Activated CD4-positive, alpha-beta T cell treated with anti-CD3 and anti-CD28 coated beads for 36 hours (primary cell): ENCODE measurements at regions of chr16 and their contacts with region 1.

Region 1: DNA sequence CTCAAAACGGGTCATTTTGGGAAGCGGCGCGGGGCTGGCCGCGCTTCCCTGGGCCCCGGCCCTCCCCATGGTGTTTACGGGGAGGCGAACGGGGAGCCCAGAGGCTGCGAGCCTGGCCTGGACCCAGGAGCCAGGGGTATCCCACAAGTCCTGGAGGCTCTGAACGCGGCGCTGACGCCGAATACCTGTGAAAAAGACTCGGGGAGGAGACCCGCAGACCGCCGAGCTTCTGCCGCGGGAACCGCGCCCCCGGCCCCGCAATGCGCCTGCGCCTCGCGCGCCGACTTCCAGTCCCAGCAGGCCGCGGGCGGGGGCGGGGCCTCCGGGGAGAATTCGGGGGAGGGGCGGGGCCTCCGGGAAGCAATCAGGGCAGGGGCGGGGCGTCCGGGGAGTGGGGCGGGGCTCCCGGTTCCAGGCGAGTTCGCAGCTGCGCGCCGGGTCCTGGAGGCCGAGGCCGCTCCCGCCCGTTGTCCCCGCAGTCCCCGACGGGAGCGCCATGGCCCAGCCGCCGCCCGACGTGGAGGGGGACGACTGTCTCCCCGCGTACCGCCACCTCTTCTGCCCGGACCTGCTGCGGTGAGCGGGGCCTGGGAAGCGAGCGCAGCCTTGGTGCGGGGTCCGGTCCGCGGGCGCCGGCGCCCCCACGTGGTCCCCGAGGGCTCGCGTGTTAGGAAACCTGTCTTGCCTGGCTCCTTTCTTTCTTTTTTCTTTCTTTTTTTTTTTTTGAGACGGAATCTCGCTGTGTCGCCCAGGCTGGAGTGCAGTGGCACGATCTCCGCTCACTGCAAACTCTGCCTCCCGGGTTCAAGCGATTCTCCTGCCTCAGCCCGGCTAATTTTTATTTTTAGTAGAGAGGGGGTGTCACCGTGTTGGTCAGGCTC is at the start of gene DECR2:
- DNase-seq: peak; percentile 100
- ATAC-seq: peak; percentile 87
- H3K4me3 Mint-ChIP-seq: peak within 1 kb of the TSS; percentile 82
- H3K27ac Mint-ChIP-seq: peak within 1 kb of the TSS; percentile 87
- H3K4me1 Mint-ChIP-seq: peaks cover 10% of the 10 kb centered on the region
- H3K27me3 Mint-ChIP-seq: no peaks in the 10 kb centered on the region
- total RNA-seq, gene DECR2: 11.5 to 13.0 TPM

Region 2: DNA sequence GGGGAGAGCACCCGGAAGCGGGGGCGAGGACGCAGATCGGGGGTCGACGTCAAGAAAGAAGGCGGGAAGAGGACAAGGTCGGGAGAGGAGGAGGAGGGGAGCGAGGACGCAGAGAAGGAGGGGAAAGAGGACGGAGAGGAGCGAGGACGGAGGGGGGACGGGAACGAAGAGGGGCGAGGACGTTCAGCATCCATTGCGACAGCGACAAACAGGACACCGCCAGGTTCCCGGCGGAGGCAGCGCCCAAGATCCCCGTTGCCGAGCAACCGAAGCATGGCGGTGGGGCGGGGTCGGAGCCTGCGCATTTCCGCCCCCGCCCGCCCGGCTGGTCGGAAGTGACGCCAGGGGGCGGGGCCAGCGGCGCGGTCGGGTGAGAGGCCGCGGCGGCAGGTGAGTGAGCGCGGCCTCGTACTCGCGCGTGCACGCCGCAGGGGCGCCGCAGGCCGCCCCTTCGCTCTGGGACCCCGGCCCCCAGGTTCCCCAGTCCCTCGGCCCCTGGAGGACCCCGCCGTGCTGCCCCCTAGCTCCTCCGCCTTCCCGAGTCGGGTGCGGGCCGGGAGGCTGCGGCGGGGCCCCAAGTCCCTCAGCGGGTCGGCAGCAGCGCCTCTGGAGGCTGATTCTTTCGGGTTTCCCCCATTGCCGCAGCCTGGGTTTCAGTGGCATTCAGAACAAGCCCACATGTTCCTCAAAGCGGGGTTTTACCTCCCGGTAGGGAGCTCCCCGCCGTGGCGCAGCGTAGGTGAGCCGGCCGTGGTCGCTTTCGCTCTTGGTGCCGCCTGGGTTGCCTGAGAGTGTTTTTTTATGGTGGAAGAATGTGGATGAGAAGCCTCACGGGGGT is 167.0 kb before region 1 on chr16 and contains the start of gene FAM234A:
- CTCF ChIA-PET with region 1: no interaction called
- POLR2A ChIA-PET with region 1: no interaction called
- intact Hi-C with region 1: loop called in 1 of 2 experiments (anchors 1 kb)
- DNase-seq: peak; percentile 98
- ATAC-seq: peak; percentile 91
- H3K4me3 Mint-ChIP-seq: peak within 1 kb of the TSS; percentile 90
- H3K27ac Mint-ChIP-seq: peak within 1 kb of the TSS; percentile 96
- H3K4me1 Mint-ChIP-seq: peaks cover 17% of the 10 kb centered on the region
- H3K27me3 Mint-ChIP-seq: no peaks in the 10 kb centered on the region
- total RNA-seq, gene FAM234A: 11.3 to 15.2 TPM

Region 3: DNA sequence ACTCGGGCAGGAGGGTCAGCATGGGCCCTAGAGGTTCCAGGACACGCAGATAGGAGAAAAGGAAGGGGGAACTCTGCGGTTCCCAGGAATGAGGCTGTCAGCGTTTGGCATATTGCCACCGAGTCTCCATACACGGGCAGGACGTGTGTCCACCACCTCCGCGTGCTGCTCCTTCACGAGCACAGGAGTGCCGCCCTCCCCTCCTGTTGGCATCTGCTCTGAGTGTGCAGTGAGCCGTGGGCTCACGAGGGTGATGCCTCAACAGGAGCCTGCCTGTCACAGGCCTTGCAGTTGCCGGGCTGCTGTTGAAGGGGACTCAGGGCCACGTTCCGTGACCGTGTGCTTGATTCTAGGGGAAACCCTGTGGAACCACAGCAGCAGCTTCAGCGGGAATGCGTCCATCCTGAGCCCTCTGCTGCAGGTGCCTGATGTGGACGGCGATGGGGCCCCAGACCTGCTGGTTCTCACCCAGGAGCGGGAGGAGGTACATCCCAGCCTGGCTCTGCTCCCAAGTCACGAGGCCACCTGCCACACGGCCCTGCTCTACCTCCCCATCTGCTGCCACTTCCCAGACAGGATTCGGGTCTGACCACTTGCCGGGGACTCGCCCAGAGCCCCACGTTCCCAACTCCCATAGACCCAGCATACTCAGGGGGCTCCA is 140.5 kb before region 1 on chr16:
- CTCF ChIA-PET with region 1: no interaction called
- POLR2A ChIA-PET with region 1: no interaction called
- intact Hi-C with region 1: no loop called
- DNase-seq: no peak
- ATAC-seq: no peak
- H3K4me3 Mint-ChIP-seq: no peak overlapping the region
- H3K27ac Mint-ChIP-seq: no peak overlapping the region
- H3K4me1 Mint-ChIP-seq: peaks cover 5% of the 10 kb centered on the region
- H3K27me3 Mint-ChIP-seq: no peaks in the 10 kb centered on the region

Region 4: GRCh38 chr16:381789-382717 is 19.7 kb before region 1 on chr16 and contains the start of gene PGAP6:
- CTCF ChIA-PET with region 1: no interaction called
- POLR2A ChIA-PET with region 1: interaction called, 3 read pairs
- intact Hi-C with region 1: loop called in 1 of 2 experiments (anchors 1 kb)
- DNase-seq: peak; percentile 83
- ATAC-seq: peak; percentile 73
- H3K4me3 Mint-ChIP-seq: peak within 1 kb of the TSS; percentile 74
- H3K27ac Mint-ChIP-seq: no peak within 1 kb of the TSS
- H3K4me1 Mint-ChIP-seq: peaks cover 24% of the 10 kb centered on the region
- H3K27me3 Mint-ChIP-seq: no peaks in the 10 kb centered on the region
- total RNA-seq, gene PGAP6: 22.9 to 40.8 TPM

Region 5: GRCh38 chr16:521381-522210 is 119.9 kb after region 1 on chr16:
- CTCF ChIA-PET with region 1: no interaction called
- POLR2A ChIA-PET with region 1: no interaction called
- intact Hi-C with region 1: no loop called
- DNase-seq: no peak
- ATAC-seq: no peak
- H3K4me3 Mint-ChIP-seq: no peak overlapping the region
- H3K27ac Mint-ChIP-seq: no peak overlapping the region
- H3K4me1 Mint-ChIP-seq: peaks cover 21% of the 10 kb centered on the region
- H3K27me3 Mint-ChIP-seq: no peaks in the 10 kb centered on the region

Region 6: GRCh38 chr16:569445-570254 is 167.9 kb after region 1 on chr16 and contains the start of gene PIGQ:
- CTCF ChIA-PET with region 1: no interaction called
- POLR2A ChIA-PET with region 1: no interaction called
- intact Hi-C with region 1: loop called in 1 of 2 experiments (anchors 1 kb)
- DNase-seq: peak; percentile 79
- ATAC-seq: peak; percentile 70
- H3K4me3 Mint-ChIP-seq: peak within 1 kb of the TSS; percentile 79
- H3K27ac Mint-ChIP-seq: peak within 1 kb of the TSS; percentile 92
- H3K4me1 Mint-ChIP-seq: peaks cover 26% of the 10 kb centered on the region
- H3K27me3 Mint-ChIP-seq: no peaks in the 10 kb centered on the region
- total RNA-seq, gene PIGQ: 24.2 to 24.7 TPM

Region 7: GRCh38 chr16:684067-684794 is 282.5 kb after region 1 on chr16 and contains the start of gene JMJD8:
- CTCF ChIA-PET with region 1: no interaction called
- POLR2A ChIA-PET with region 1: no interaction called
- intact Hi-C with region 1: loop called in 1 of 2 experiments (anchors 5 kb)
- DNase-seq: peak; percentile 99
- ATAC-seq: peak; percentile 80
- H3K4me3 Mint-ChIP-seq: peak within 1 kb of the TSS; percentile 76
- H3K27ac Mint-ChIP-seq: peak within 1 kb of the TSS; percentile 58
- H3K4me1 Mint-ChIP-seq: peaks cover 40% of the 10 kb centered on the region
- H3K27me3 Mint-ChIP-seq: no peaks in the 10 kb centered on the region
- total RNA-seq, gene JMJD8: 26.1 to 31.4 TPM

Region 8: DNA sequence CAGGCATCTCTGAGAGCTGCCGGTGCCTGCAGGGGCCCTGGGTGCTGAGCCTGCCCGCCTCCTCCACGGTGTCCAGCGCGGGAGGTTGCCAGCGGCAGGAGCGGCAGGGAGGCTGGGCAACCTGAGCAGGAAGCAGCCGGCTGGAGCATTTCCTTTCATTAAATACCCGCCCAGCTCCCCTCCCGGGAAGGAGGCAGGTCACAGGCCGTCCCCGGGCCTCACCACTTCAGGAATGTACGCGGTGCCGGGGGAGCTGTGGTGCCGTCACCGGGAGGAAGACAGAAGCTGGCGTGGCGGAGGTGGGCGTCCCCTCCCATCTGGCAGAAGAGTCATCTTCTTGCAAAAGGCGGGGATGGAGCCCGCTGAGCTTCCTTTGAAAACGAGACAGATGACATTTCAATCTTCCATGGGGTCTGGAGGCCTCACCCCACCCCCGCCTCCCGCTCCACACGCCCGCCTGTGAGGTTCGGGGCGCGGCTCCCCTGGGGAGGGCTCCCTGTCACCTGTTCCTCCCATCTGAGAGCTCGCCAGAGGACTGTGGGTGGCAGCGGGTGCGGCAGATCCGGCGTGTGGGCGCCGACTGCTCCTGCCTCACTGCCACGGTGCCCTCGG is 595.8 kb after region 1 on chr16:
- CTCF ChIA-PET with region 1: no interaction called
- POLR2A ChIA-PET with region 1: no interaction called
- intact Hi-C with region 1: no loop called
- DNase-seq: peak; percentile 72
- ATAC-seq: peak; percentile 61
- H3K4me3 Mint-ChIP-seq: peak overlapping the region; percentile 41
- H3K27ac Mint-ChIP-seq: no peak overlapping the region
- H3K4me1 Mint-ChIP-seq: peaks cover 46% of the 10 kb centered on the region
- H3K27me3 Mint-ChIP-seq: peaks cover 2% of the 10 kb centered on the region